ENCODE measurements at regions of chr13 and their contacts with region 1.

Region 1: DNA sequence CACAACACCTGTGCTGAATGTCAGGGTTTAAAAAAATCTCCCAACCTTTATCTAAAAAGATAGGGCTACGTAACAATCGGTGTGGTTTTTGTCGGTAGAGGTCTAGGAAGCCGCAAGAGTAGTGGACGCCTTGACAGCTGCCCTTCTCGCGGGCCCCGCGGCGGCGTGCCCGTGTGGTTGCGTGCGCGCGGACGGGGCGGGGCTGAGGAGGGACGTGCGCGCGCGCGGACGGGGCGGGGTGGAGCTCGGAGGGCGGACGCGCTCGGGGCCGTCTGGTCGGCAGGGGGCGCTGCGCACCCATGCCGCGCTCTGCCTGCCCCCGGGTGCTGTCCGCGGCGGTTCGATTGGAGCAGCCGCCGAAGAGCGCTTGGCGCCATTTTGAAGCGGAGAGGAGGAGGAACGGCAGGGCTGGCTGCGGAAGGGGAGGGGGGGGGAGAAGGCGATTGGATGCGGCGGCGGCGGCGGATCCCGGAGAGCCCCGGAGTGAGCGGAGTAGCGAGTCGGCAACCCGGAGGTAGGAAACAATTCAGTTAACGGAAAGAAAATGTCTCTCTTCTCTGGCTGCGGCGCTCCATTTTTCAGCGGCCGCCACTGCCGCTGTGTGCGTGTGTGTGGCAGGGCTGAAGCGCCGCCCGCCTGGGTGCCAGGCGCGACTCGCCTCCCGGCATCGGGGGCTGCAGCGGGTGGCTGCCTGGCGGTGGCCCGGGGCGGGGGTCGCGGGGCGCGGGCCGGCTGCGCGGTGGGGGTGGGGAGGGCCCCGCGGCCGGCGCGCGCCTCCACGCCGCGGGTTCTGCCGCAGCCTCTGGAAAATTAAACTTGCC is at the start of gene PDS5B:
- DNase-seq: peak; percentile 94
- CTCF ChIP-seq: peak; percentile 95

Region 2: GRCh38 chr13:31862828-31863227 is 723.5 kb before region 1 on chr13:
- in situ Hi-C with region 1: no loop called
- DNase-seq: no peak
- CTCF ChIP-seq: no peak

Region 3: DNA sequence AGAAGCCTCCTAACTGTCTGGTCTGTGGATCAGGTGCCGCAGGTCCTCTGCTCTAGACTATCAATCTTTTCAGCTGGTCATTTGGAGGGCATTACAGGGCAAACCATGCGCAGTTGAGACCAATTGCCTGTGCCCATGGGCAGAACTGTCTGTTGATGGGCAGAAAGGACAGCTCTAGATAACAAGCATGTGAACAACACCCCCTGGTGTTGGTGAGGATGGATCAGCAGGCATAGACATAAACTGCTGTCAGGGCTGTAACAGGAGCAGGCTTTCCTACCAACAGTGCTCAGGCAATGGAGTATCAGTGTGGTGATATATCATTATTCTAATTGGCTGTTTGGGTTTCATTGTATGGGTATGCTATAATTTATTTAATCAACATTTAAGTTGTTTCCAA is 325.2 kb after region 1 on chr13:
- in situ Hi-C with region 1: loop called (anchors 25 kb)
- DNase-seq: peak; percentile 64
- CTCF ChIP-seq: peak; percentile 54

Region 4: GRCh38 chr13:33017323-33017929 is 431.1 kb after region 1 on chr13:
- in situ Hi-C with region 1: loop called (anchors 25 kb)
- DNase-seq: peak; percentile 80
- CTCF ChIP-seq: peak; percentile 60

Measured in GM13976 (cell line).